Activated CD4-positive, alpha-beta memory T cell treated with anti-CD3 and anti-CD28 coated beads for 36 hours (primary cell): ENCODE measurements at regions of chr4 and their contacts with region 1.

Region 1: DNA sequence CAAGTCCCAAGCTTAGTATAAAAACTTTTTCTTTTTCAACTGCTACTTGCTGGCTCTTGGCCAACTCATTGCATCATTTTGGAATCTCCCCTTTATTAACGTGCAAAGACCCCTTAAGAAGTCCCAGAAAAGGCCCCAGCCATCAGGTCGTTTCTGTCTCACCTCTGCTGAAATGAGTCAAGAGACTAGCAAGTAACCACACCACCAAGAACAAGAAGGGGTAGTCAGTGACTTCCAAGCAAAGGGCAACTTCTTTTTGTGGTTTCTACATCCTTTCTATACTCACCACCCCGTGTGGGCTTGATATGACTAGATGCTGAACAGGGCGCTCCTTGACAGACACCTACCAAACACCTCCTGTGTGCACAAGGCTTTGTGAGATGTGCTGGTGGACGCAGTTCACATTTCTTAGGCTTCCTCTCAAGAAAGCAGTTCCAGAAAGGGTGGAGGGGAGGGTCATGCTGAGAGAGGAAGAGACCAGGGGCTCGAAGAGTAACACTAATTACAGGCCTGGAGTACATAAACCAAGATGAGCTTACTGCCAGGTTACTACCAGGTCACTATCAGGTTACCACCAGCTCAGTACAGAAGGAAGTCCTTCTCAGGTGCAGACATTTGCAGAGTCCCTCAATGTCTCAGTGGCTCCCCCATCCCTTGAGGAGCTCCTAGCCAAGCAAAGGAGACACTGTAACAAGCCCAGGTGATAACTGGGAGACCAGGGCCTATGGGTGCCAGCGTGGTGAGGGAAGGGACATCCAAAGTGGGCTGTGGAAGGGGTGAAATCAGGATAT is 19.3 kb downstream of the JAKMIP1 start:
- DNase-seq: peak; percentile 82
- H3K4me3 Mint-ChIP-seq: no peak overlapping the region
- H3K27ac Mint-ChIP-seq: peak overlapping the region; percentile 96
- H3K4me1 Mint-ChIP-seq: peaks cover 79% of the 10 kb centered on the region
- H3K27me3 Mint-ChIP-seq: no peaks in the 10 kb centered on the region

Region 2: DNA sequence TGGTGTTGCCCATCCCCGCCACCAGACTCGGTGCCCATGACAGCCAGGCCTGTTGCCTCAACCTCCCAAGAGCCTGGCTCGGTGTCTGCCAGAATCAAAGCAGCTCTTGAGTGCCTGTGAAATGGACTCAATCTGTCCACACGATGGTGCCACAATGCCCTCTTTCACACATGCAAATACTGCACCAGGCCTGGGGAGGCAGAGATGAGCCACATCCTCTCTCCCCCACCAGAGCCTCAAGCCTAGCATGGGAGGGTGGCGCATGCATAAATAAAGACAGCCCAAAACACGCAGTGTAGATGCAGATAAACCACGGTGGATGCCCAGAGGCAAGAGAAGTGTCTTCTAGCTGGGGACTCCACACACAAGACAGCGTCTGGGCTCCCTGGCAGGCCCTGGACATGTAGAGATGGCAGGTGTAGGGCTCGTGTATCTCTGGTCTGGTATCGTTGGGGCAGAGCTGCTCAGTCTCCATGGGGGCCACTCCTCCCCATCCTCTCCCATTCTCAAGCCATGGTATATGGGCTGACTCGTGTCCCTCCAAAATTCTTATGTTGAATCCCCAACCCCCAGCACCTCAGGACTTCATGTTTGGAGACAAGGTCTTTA is 46.3 kb before region 1 on chr4:
- CTCF ChIA-PET with region 1: interaction called, 3 read pairs
- POLR2A ChIA-PET with region 1: no interaction called
- intact Hi-C with region 1: loop called (anchors 5 kb)
- DNase-seq: peak; percentile 73
- H3K4me3 Mint-ChIP-seq: no peak overlapping the region
- H3K27ac Mint-ChIP-seq: no peak overlapping the region
- H3K4me1 Mint-ChIP-seq: peaks cover 8% of the 10 kb centered on the region
- H3K27me3 Mint-ChIP-seq: no peaks in the 10 kb centered on the region

Region 3: GRCh38 chr4:6153874-6154273 is 27.2 kb before region 1 on chr4:
- CTCF ChIA-PET with region 1: no interaction called
- POLR2A ChIA-PET with region 1: interaction called, 11 read pairs
- intact Hi-C with region 1: no loop called
- DNase-seq: no peak
- H3K4me3 Mint-ChIP-seq: no peak overlapping the region
- H3K27ac Mint-ChIP-seq: no peak overlapping the region
- H3K4me1 Mint-ChIP-seq: peaks cover 28% of the 10 kb centered on the region
- H3K27me3 Mint-ChIP-seq: no peaks in the 10 kb centered on the region

Region 4: GRCh38 chr4:6200011-6200921 is 19.2 kb after region 1 on chr4 and contains the start of gene JAKMIP1:
- CTCF ChIA-PET with region 1: interaction called, 11 read pairs
- POLR2A ChIA-PET with region 1: interaction called, 60 read pairs
- intact Hi-C with region 1: loop called (anchors 1 kb)
- DNase-seq: peak; percentile 93
- H3K4me3 Mint-ChIP-seq: peak within 1 kb of the TSS; percentile 80
- H3K27ac Mint-ChIP-seq: peak within 1 kb of the TSS; percentile 74
- H3K4me1 Mint-ChIP-seq: peaks cover 35% of the 10 kb centered on the region
- H3K27me3 Mint-ChIP-seq: peaks cover 15% of the 10 kb centered on the region
- total RNA-seq, gene JAKMIP1: 17.7 to 18.1 TPM

Region 5: DNA sequence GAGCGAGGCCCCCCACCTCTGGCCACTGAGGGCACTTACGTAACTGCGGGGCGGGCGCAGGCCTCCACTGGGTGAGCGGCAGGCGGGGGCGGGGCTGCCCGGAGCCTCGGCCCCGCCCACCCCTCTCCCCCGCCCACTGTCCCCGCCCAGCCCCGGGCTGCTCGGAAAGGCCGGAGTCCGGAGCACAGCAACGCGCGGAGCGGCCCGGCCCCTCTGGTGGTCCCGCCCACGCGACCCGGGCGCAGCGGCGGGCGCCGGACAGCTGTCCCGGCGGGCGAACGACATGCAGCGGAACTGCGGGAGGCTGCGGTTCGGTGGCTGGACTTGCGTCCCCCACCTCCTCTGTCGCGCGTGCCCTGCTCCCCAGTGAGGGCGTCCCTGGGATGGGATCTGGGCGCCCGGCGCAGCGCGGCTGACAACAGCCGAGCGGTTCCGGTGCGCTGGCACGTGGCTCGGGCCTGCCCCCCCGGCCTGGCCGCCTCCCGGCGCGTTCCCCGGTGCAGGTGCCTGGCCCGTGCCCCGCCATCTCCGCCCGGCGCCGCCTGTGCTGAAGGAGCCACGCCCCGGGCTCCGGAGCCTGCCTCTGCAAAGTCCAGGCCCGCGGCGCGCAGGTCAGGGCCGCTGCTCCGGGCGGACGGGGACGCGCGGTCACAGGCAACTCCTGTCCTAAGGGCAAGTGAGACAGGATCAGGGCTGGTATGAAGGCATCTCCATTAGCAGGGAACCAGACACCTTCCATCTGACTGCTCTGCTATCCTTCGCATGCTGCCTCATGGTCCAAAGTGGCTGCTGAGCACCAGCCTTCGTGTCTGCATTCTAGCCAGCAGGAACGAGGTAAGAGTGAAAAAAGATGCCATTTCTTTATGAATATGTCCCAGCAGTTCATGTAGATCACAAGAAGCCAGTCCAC is 41.1 kb after region 1 on chr4:
- CTCF ChIA-PET with region 1: no interaction called
- POLR2A ChIA-PET with region 1: no interaction called
- intact Hi-C with region 1: no loop called
- DNase-seq: peak; percentile 40
- H3K4me3 Mint-ChIP-seq: no peak overlapping the region
- H3K27ac Mint-ChIP-seq: no peak overlapping the region
- H3K4me1 Mint-ChIP-seq: no peaks in the 10 kb centered on the region
- H3K27me3 Mint-ChIP-seq: peaks cover 48% of the 10 kb centered on the region